ENCODE measurements at regions of chr11 and their contacts with region 1.

Region 1: DNA sequence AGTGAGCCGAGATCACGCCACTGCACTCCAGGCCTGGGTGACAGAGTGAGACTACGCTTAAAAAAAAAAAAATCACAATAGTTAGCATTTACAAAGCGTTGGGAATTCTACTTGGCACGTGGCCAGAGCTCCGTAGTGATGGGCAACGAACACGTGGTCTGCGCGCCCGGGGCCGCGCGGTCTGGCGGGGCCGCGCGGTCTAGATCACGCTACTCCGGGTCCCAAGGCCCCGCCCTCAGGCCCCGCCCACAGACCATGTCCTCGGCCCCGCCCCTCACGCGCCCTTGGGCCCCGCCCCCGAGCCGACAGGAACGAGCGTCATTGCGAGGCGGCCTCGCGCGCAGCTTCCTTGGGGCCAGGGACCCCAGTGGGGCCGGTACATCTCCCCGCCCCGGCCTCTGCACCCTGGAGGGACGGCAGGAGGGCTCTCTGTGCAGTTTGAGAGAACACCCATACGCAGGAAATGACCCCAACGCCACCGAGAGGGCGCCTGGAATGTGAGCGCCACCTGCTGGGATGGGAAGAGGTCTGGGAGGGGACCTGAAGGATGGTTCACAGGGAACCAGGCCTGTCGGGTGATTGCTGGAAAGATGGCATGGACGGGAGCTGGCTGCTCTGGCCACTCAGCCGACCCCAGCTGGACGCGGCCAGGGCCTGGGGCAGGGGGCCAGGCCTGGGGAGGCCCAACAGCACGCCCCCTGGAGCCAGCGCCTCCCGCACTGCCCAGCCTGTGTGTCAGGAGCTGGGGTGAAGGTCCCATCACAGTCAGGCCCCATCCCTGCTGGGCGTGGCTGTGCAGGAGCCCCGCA is 2.0 kb upstream of the PTDSS2 start:
- DNase-seq: peak; percentile 90 to 96 (median 93)
- H3K4me3 ChIP-seq: peak overlapping the region; percentile 76
- H3K4me3 Mint-ChIP-seq: peak overlapping the region; percentile 88 to 97 (median 90)
- H3K27ac ChIP-seq: peak overlapping the region; percentile 79
- H3K27ac Mint-ChIP-seq: peak overlapping the region; percentile 94 to 98 (median 98)
- H3K4me1 ChIP-seq: peaks cover 22% of the 10 kb centered on the region
- H3K4me1 Mint-ChIP-seq: peaks cover 15 to 30% (median 25%) of the 10 kb centered on the region in 3 donors
- H3K27me3 ChIP-seq: no peaks in the 10 kb centered on the region
- H3K27me3 Mint-ChIP-seq: peaks cover 0 to 2% of the 10 kb centered on the region in 2 donors

Region 2: GRCh38 chr11:236774-237767 is 211.1 kb before region 1 on chr11 and contains the start of gene PSMD13:
- CTCF ChIA-PET with region 1: interaction called, 11 read pairs
- POLR2A ChIA-PET with region 1: no interaction called
- DNase-seq: peak; percentile 83 to 91 (median 88)
- H3K4me3 ChIP-seq: peak within 1 kb of the TSS; percentile 95
- H3K4me3 Mint-ChIP-seq: peak within 1 kb of the TSS; percentile 95 to 100 (median 97)
- H3K27ac ChIP-seq: peak within 1 kb of the TSS; percentile 100
- H3K27ac Mint-ChIP-seq: peak within 1 kb of the TSS; percentile 98 to 100 (median 100)
- H3K4me1 ChIP-seq: peaks cover 24% of the 10 kb centered on the region
- H3K4me1 Mint-ChIP-seq: peaks cover 39 to 71% (median 53%) of the 10 kb centered on the region in 3 donors
- H3K27me3 ChIP-seq: no peaks in the 10 kb centered on the region
- H3K27me3 Mint-ChIP-seq: peaks cover 0 to 4% of the 10 kb centered on the region in 2 donors
- total RNA-seq, gene PSMD13: 235 to 237 TPM

Region 3: DNA sequence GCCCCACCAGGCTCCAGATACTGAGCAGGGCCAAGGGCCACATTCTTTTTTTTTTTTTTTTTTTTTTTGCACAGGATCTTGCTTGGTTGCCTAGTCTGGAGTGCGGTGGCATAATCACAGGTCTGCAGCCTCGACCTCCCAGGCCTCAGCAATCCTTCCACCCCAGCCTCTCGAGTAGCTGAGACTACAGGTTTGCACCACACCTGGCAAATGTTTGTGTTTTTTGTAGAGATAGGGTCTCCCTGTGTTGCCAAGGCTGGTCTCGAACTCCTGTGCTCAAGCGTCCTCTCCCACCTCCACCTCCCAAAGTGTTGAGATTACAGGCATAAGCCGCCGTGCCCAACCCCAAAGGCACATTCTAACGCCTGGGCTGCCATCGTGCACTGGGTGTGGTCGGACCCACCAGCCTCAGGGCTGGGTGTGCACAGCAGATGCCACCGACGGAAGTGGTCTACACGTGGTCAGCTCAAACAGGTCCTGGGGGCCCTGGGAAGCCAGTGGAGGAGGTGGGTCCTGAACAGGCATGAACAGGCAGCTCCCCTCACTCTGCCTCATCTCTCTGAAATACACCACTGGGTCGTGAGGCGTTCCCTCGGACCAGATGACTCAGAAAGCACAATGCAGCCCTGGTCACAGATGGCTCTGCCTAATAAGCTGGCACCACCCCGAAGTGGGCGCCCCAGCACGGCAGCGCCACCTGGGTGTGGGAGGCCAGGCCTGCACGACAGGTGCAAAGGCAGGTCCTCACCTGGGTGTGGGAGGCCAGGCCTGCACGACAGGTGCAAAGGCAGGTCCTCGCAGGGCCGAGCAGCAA is 84.0 kb before region 1 on chr11:
- CTCF ChIA-PET with region 1: interaction called, 20 read pairs
- POLR2A ChIA-PET with region 1: no interaction called
- DNase-seq: peak; percentile 58 to 81 (median 65)
- H3K4me3 ChIP-seq: peak overlapping the region; percentile 20
- H3K4me3 Mint-ChIP-seq: peak overlapping the region in 6 of 7 donors; percentile 17 to 74 (median 40)
- H3K27ac ChIP-seq: no peak overlapping the region
- H3K27ac Mint-ChIP-seq: peak overlapping the region in 6 of 8 donors; percentile 58 to 79 (median 68)
- H3K4me1 ChIP-seq: peaks cover 28% of the 10 kb centered on the region
- H3K4me1 Mint-ChIP-seq: peaks cover 19 to 27% (median 21%) of the 10 kb centered on the region in 3 donors
- H3K27me3 ChIP-seq: peaks cover 24% of the 10 kb centered on the region
- H3K27me3 Mint-ChIP-seq: peaks cover 23 to 31% of the 10 kb centered on the region in 2 donors

Region 4: GRCh38 chr11:406978-407739 is 41.0 kb before region 1 on chr11:
- CTCF ChIA-PET with region 1: interaction called, 158 read pairs
- POLR2A ChIA-PET with region 1: interaction called, 71 read pairs
- DNase-seq: peak; percentile 94 to 98 (median 96)
- H3K4me3 ChIP-seq: peak overlapping the region; percentile 43
- H3K4me3 Mint-ChIP-seq: peak overlapping the region in 6 of 7 donors; percentile 24 to 78 (median 35)
- H3K27ac ChIP-seq: peak overlapping the region; percentile 70
- H3K27ac Mint-ChIP-seq: peak overlapping the region; percentile 34 to 91 (median 74)
- H3K4me1 ChIP-seq: peaks cover 20% of the 10 kb centered on the region
- H3K4me1 Mint-ChIP-seq: peaks cover 0 to 32% (median 12%) of the 10 kb centered on the region in 3 donors
- H3K27me3 ChIP-seq: no peaks in the 10 kb centered on the region
- H3K27me3 Mint-ChIP-seq: no peaks in the 10 kb centered on the region

Region 5: GRCh38 chr11:426721-427250 is 21.3 kb before region 1 on chr11:
- CTCF ChIA-PET with region 1: interaction called, 11 read pairs
- POLR2A ChIA-PET with region 1: interaction called, 4 read pairs
- DNase-seq: peak in 1 of 5 donors; percentile 16
- H3K4me3 ChIP-seq: no peak overlapping the region
- H3K4me3 Mint-ChIP-seq: no peak overlapping the region
- H3K27ac ChIP-seq: no peak overlapping the region
- H3K27ac Mint-ChIP-seq: no peak overlapping the region
- H3K4me1 ChIP-seq: no peaks in the 10 kb centered on the region
- H3K4me1 Mint-ChIP-seq: peaks cover 0 to 3% (median 0%) of the 10 kb centered on the region in 3 donors
- H3K27me3 ChIP-seq: no peaks in the 10 kb centered on the region
- H3K27me3 Mint-ChIP-seq: no peaks in the 10 kb centered on the region